AG04450 (cell line): ENCODE measurements at regions of chr9 and their contacts with region 1.

Region 1: DNA sequence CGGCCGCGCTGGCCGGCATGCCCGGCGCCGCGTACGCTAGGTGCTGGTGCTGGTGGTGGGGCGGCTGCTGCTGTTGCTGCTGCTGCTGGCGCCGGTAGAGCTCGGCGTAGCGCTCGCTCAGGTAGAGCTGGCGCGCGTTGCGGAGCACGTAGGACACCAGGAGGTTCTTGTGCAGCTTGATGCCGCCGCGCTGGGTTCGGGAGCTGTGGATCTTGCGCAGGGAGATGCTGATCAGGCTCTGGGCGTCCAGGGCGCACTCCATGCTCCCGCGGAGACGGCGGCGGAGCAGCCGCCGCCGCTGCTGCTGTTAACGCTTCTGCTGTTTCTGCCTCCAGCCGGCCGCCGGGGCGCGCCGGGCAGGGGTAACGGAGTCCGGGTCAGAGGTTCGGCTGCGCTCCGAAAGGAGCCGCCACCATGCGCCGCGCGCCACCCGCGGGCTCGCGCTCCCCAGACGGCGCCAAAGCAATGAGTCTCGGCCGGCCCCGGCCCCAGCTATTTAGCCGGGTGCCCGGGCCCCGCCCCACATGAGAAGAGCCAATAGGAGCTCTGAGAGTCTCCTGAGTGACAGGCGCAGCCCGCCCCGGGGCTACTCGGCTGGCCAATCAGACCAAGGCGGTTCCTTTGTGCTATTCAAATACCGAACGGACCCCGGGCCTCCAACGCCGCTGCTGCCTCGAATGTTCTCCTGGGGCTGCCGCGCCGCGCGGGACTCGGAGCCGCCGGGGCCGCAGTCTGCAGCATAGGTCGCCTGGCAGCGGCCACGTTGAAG is at the start of gene IER5L:
- DNase-seq: peak; percentile 88
- H3K4me3 ChIP-seq: peak within 1 kb of the TSS; percentile 91
- H3K27ac ChIP-seq: peak within 1 kb of the TSS; percentile 61
- H3K27me3 ChIP-seq: no peaks in the 10 kb centered on the region
- CTCF ChIP-seq: no peak
- polyA plus RNA-seq, gene IER5L: 4.9 TPM in 2 replicates

Region 2: GRCh38 chr9:129052592-129052991 is 125.4 kb before region 1 on chr9:
- CTCF ChIA-PET with region 1: no interaction called
- POLR2A ChIA-PET with region 1: no interaction called
- DNase-seq: no peak
- H3K4me3 ChIP-seq: no peak overlapping the region
- H3K27ac ChIP-seq: no peak overlapping the region
- H3K27me3 ChIP-seq: no peaks in the 10 kb centered on the region
- CTCF ChIP-seq: no peak

Region 3: DNA sequence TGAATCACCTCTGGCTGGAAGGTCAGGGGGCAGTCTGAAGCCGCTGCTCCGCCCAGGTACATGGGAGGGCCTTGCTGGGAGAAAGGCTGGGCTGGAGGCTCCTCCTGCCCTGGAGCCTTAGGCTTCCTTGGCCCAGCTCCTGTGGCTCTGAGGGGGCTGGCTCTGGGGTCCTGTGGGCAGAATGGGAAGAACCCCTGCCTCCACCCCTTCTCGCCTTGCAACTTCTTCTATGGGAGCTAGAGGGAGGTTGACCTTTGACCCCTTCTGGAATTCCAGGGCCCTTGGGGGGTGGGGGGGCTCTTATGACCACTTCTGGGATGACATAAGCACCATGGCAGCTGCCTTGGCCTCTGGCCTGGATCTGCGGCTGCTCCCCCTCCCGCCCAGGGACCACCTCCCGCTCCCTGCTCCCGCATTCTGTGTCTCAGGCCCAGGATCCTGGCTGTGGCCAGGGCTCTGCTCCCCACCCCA is 32.1 kb before region 1 on chr9:
- CTCF ChIA-PET with region 1: interaction called, 145 read pairs
- POLR2A ChIA-PET with region 1: interaction called, 44 read pairs
- DNase-seq: peak; percentile 86
- H3K4me3 ChIP-seq: no peak overlapping the region
- H3K27ac ChIP-seq: peak overlapping the region; percentile 97
- H3K27me3 ChIP-seq: no peaks in the 10 kb centered on the region
- CTCF ChIP-seq: no peak

Region 4: DNA sequence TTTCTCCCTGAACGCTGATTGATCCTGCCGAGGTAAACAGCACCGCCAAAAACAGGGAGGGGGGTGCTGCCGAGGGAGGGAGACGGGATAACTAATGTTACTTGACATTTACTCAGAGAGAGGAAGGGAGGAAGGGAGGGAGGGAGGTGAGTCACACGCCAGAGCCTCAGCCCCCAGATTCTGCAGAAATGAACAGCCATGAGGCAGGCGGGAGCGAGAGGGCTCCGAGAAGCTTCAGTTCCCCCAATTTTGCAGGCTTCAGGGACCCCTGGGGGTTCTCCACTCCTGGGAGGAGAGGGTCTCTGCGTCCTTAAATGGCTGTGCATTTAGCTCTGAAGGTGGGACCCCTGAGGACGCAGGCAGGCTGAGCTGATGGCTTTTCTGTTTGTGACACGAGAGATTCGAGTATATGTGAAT is 59.2 kb after region 1 on chr9:
- CTCF ChIA-PET with region 1: no interaction called
- POLR2A ChIA-PET with region 1: interaction called, 14 read pairs
- DNase-seq: no peak
- H3K4me3 ChIP-seq: peak overlapping the region; percentile 15; the same call in 1 of the 2 replicates
- H3K27ac ChIP-seq: no peak overlapping the region
- H3K27me3 ChIP-seq: no peaks in the 10 kb centered on the region
- CTCF ChIP-seq: no peak

Region 5: GRCh38 chr9:129327560-129328286 is 149.7 kb after region 1 on chr9:
- CTCF ChIA-PET with region 1: interaction called, 10 read pairs
- POLR2A ChIA-PET with region 1: interaction called, 10 read pairs
- DNase-seq: no peak
- H3K4me3 ChIP-seq: no peak overlapping the region
- H3K27ac ChIP-seq: no peak overlapping the region
- H3K27me3 ChIP-seq: no peaks in the 10 kb centered on the region
- CTCF ChIP-seq: no peak

Region 6: DNA sequence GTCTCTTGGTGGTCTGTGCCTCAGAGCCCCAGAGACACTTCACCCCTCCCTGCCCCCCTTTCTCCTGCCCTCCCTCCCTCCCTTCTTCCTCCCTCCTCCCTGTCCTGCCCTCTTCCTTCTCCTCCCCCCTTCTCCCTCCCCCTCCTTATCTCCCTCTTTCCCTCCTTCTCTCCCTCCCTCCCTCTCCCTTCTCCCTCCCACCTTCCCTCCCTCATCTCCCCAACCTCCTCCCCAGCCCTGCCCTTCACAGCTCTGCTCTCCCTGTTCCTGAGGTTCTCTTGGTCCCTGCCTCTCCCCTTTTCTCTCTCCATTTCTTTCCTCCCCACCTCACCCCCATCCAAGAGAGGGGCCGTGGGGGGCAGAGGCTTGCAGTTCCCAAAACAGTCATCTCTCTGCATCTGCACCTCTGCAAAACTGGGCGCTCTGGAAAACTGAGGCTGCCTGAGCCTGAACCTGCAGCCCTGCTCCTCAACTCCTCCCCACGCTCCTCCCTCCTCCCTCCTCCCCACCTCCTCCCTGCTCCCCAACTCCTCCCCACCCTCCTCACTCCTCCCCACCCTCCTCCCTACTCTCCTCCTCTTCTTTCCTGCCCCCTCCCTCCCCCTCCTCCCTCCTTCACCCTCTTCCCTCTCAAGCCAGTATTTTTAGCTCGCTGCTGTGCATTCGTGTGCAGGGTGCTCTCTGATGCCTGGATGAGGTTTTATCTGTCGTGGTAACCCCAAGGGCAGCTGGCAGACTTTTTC is 223.8 kb after region 1 on chr9:
- CTCF ChIA-PET with region 1: no interaction called
- POLR2A ChIA-PET with region 1: no interaction called
- DNase-seq: no peak
- H3K4me3 ChIP-seq: no peak overlapping the region
- H3K27ac ChIP-seq: no peak overlapping the region
- H3K27me3 ChIP-seq: no peaks in the 10 kb centered on the region
- CTCF ChIP-seq: no peak

Region 7: GRCh38 chr9:129460323-129461261 is 282.6 kb after region 1 on chr9:
- CTCF ChIA-PET with region 1: interaction called, 15 read pairs
- POLR2A ChIA-PET with region 1: interaction called, 12 read pairs
- DNase-seq: peak; percentile 96
- H3K4me3 ChIP-seq: peak overlapping the region; percentile 55
- H3K27ac ChIP-seq: peak overlapping the region; percentile 99
- H3K27me3 ChIP-seq: no peaks in the 10 kb centered on the region
- CTCF ChIP-seq: peak; percentile 27; the same call in 1 of the 2 replicates

Region 8: GRCh38 chr9:129569502-129570449 is 391.8 kb after region 1 on chr9:
- CTCF ChIA-PET with region 1: interaction called, 5 read pairs
- POLR2A ChIA-PET with region 1: interaction called, 12 read pairs
- DNase-seq: no peak
- H3K4me3 ChIP-seq: no peak overlapping the region
- H3K27ac ChIP-seq: peak overlapping the region; percentile 92
- H3K27me3 ChIP-seq: no peaks in the 10 kb centered on the region
- CTCF ChIP-seq: peak; percentile 49

Region 9: DNA sequence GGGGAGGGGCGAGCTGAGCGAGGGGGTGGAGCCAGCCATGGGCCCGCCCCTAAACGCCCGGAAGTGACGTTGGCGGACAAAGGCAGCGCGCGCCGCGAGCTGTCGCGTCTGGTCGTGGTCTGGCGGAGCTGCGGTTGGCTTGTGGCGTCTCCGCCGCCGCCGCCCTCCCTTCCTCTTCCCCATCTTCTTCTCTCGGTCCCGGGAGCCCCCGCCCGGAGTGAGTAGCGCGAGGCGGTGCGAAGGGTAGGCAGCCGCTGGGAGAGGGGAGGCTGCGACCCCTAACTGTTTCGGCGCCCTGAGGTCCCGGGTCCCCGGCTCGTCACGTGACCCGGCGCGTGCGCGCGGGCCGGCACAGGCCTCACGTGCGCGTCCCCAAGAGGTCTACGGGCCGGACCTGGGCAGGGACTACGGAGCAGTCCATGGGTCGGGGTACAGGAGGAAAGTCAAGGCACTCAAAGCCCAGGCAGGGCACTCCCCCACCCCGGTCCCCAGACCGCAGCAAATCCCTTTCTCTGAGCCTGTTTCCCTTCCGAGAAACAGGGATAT is 448.2 kb after region 1 on chr9 and contains the start of gene NTMT1:
- CTCF ChIA-PET with region 1: interaction called, 10 read pairs
- POLR2A ChIA-PET with region 1: interaction called, 12 read pairs
- DNase-seq: no peak
- H3K4me3 ChIP-seq: peak within 1 kb of the TSS; percentile 92
- H3K27ac ChIP-seq: peak within 1 kb of the TSS; percentile 94
- H3K27me3 ChIP-seq: no peaks in the 10 kb centered on the region
- CTCF ChIP-seq: no peak
- polyA plus RNA-seq, gene NTMT1: 49.3 and 50.4 TPM in 2 replicates